GM23248 (cell line): ENCODE measurements at regions of chr18 and their contacts with region 1.

Region 1: DNA sequence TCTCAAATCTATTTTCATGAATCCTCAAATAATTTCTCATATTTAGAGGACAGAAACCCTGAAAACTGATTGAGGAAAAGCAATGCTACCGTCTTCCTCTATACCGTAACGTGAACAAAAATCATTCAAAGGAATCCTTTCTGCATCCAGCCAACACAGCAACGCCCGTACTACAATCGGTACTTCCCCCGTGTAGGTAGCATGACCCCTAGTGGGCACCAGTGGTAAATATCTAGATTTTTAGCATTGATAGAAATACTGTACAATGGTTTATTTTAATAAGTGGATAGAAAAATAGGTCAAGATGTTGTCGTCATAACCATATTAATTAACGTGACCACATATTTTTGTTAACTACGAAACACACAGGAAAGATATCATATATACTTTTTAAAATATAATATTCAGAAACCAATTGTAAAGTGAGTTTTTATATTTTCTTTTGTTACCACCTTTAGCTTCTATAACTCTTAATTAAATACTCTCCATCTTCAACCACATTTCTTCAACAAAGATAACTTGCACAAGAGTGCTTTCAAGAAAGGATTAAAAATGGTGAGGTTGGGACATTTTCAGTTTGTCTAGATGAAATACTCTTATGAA is 194.1 kb downstream of the SS18 start:
- DNase-seq: peak; percentile 67
- H3K4me3 ChIP-seq: no peak overlapping the region
- H3K27ac ChIP-seq: no peak overlapping the region
- H3K4me1 ChIP-seq: no peaks in the 10 kb centered on the region
- H3K27me3 ChIP-seq: no peaks in the 10 kb centered on the region; the same call in none of the 2 replicates

Region 2: GRCh38 chr18:24878289-24878688 is 1018.0 kb before region 1 on chr18:
- in situ Hi-C with region 1: loop called (anchors 25 kb)
- DNase-seq: peak; percentile 69
- H3K4me3 ChIP-seq: no peak overlapping the region
- H3K27ac ChIP-seq: no peak overlapping the region
- H3K4me1 ChIP-seq: peaks cover 17% of the 10 kb centered on the region
- H3K27me3 ChIP-seq: 0 out of 2 replicates have a peak, but pooled peaks cover 11% of the 10 kb centered on the region

Region 3: GRCh38 chr18:26190506-26190905 is 294.2 kb after region 1 on chr18:
- in situ Hi-C with region 1: no loop called
- DNase-seq: no peak
- H3K4me3 ChIP-seq: no peak overlapping the region
- H3K27ac ChIP-seq: no peak overlapping the region
- H3K4me1 ChIP-seq: no peaks in the 10 kb centered on the region
- H3K27me3 ChIP-seq: no peaks in the 10 kb centered on the region